ENCODE measurements at regions of chr7 and their contacts with region 1.

Region 1: GRCh38 chr7:12539681-12540080 is 30.8 kb upstream of the SCIN start:
- DNase-seq: no peak
- H3K4me3 ChIP-seq: no peak overlapping the region
- CTCF ChIP-seq: no peak
- POLR2A ChIP-seq: no peak

Region 2: GRCh38 chr7:12601302-12601869 is 61.7 kb after region 1 on chr7:
- intact Hi-C with region 1: loop called (anchors 10 kb)
- DNase-seq: no peak
- H3K4me3 ChIP-seq: no peak overlapping the region
- CTCF ChIP-seq: no peak
- POLR2A ChIP-seq: no peak

Region 3: DNA sequence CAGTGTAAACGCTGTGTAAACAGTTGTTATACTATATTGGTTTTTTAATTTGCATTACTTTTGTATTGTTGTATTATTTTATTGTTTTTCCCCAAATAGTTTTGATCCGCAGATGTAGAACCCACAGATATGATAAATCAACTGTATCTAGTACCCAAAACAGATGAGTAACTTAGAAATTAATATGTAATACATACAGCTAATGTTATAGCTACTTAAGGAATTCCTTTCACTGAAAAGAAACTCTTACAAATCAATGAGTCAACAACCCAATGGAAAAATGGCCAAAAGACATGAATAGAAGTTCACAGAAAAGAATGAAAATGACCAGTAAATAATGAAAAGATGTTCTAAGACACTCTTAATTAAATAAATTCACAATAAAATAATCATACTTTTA is 115.5 kb after region 1 on chr7:
- intact Hi-C with region 1: no loop called
- DNase-seq: no peak
- H3K4me3 ChIP-seq: no peak overlapping the region
- CTCF ChIP-seq: no peak
- POLR2A ChIP-seq: no peak

Measured in lower leg skin (tissue), 4 donors.